Esophagus squamous epithelium (tissue), 5 donors: ENCODE measurements at regions of chr7 and their contacts with region 1.

Region 1: DNA sequence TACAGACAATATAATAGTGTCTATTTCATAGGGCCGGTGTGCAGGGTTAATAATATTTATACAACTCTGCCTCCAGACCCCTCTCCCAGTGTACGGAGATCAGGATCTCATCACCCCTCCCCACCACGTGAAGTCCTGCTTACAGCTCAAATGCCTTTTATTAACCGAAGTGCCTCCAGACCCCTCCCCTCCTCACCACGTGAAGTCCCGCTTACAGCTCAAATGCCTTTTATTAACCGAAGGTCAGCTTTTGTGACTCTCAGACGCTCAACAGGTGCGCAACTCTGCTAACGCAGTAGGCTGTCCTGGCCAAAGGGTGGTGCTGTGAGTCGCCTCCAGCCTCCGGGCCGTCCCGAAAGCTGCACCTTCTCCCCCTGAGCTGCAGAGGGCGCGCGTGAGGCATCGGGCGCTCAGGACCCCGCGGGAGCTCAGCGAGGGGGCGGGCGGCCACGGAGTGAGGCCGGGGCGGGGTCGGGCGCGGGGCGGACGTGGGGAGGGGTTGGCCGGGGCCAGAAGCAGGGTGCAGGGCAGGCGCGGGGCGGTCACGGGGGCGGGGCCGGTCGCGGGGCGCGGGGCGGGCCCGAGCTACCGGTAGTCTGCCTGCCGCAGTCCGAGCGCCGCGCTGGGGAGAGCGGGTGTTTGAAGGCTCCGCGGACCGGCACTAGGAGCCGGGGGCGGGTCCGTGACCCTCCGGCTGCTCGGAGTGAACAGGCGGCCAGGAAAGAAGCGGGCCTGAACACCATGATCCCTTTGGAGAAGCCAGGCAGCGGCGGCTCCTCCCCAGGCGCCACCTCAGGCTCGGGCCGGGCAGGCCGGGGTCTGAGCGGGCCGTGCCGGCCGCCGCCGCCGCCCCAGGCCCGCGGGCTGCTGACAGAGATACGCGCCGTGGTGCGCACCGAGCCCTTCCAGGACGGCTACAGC is at the start of gene STK17A:
- DNase-seq: peak; percentile 67
- H3K4me3 ChIP-seq: peak within 1 kb of the TSS; percentile 91 to 93 (median 92)
- H3K27ac ChIP-seq: peak within 1 kb of the TSS; percentile 94 to 99 (median 96)
- H3K4me1 ChIP-seq: peaks cover 9 to 42% (median 18%) of the 10 kb centered on the region in 3 donors
- H3K27me3 ChIP-seq: peaks cover 0 to 9% (median 0%) of the 10 kb centered on the region in 4 donors
- CTCF ChIP-seq: peak; percentile 95 to 100 (median 100)
- POLR2A ChIP-seq: peak in 3 of 4 donors; percentile 60 to 93 (median 90)
- total RNA-seq, gene STK17A: 21.9 to 34.4 (median 22.8) TPM

Region 2: DNA sequence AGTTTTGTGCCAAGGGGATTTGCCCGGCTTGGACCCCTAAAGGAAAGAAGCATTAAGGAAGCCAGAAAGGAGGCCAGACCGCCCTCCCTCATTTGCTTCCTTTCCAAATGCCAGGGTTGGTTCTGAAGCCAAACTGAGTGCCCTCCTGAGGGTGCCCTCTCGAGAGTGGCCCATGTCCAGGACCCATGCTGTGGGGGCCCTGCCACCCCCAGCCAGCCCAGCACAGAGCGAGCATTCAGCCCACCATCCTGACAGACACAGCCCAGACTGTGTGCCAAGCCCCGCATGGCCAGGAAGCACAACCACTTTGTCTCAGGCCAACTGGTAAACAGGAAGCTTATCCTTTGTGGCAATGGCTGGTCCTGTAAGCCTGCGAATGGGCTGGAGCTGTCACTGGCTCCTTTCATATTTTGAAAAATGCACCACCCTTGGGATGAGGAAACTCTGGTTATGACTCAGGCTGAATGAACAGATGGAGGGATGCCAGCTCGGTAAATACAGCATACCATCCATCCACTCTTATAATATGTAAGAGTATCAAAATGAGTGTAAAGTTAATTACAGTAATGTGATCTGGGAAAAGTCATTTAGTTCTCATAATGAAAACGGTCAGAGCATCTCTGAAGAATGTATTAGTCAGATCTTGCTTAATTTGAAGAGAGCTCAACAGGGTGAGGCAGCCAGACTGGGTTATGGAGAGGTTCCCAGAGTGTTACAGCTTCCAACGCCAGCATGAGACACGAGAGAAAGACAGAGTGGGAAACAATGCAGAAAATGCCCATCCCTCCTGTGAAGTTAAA is 65.1 kb after region 1 on chr7:
- intact Hi-C with region 1: loop called (anchors 10 kb)
- DNase-seq: no peak
- H3K4me3 ChIP-seq: peak overlapping the region in 2 of 4 donors; percentile 9 to 40
- H3K27ac ChIP-seq: peak overlapping the region; percentile 89 to 95 (median 92)
- H3K4me1 ChIP-seq: peaks cover 21 to 77% (median 63%) of the 10 kb centered on the region in 3 donors
- H3K27me3 ChIP-seq: no peaks in the 10 kb centered on the region
- CTCF ChIP-seq: no peak
- POLR2A ChIP-seq: no peak

Region 3: DNA sequence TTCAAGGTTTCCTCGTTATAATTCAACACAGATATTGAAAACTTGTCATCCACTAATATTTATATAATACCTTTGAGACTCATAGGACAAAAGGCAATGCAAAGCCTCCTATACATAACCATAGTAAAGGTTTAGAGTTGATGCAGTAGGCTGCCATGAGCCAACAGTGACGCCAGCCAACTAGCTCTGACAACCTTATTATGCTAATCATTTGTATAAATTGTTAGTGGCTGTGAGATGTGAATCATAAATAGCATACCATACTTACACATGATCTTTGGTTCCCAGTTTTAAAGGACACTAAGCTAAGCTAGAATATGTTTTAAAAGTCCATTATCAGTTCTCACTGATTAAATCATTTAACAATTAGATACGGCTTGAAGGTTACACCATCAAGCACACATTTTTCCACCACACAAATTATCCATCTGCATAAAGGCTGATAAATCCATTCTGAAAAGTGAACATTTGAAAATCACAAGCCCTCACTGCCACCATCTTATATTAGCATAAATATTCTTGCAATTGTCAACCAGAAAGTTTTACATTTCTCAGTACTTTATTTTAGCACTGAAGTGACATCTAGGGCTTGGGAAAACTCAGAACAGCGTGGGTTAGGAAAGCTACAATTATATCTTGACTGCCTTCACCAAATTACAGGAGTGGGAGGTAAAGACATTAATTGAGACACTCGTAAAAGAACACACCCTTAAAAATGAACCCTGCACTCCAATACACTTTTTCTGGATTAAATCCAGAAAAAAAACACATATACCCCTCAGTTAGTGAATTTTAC is 115.9 kb after region 1 on chr7:
- intact Hi-C with region 1: loop called (anchors 5 kb)
- DNase-seq: no peak
- H3K4me3 ChIP-seq: no peak overlapping the region
- H3K27ac ChIP-seq: no peak overlapping the region
- H3K4me1 ChIP-seq: peaks cover 0 to 10% (median 3%) of the 10 kb centered on the region in 3 donors
- H3K27me3 ChIP-seq: no peaks in the 10 kb centered on the region
- CTCF ChIP-seq: no peak
- POLR2A ChIP-seq: no peak

Region 4: DNA sequence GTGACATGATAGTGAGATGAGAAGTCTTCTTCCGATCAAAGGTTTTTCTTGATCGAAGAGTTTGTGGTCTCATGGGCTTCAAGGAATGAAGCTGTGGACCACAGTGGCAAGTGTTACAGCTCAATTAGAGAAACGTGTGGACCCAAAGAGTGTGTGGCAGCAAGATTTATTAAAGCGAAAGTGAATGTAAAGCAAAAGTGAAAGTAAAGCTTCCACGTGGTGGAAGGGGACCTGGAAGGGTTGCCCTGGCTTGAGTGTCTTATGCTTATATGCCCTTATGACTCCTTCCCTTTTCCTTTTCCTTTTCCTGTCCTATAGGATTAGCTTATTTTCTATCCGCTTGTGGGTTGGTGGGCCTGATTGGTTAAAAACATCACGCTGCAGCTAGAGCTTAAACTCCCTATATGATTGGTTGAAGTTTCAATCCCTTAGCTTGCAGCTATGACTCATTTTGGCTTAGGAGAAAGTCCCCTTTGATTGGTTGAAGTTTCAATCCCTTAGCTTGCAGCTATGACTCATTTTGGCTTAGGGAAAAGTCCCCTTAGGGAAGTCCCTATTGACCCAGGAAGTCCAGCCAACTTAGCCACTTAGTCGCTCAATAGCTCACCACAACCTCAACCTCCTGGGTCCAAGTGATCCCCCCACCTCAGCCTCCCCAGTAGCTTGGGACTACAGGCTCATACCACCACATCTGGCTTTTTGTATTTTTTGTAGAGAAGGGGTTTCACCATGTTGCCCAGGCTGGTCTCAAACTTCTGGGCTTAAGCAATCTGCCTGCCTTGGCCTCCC is 251.9 kb after region 1 on chr7:
- intact Hi-C with region 1: loop called (anchors 10 kb)
- DNase-seq: no peak
- H3K4me3 ChIP-seq: peak overlapping the region in 2 of 4 donors; percentile 12 to 57
- H3K27ac ChIP-seq: peak overlapping the region in 1 of 4 donors; percentile 10
- H3K4me1 ChIP-seq: peaks cover 0 to 9% (median 4%) of the 10 kb centered on the region in 3 donors
- H3K27me3 ChIP-seq: peaks cover 0 to under 1% (median 0%) of the 10 kb centered on the region in 4 donors
- CTCF ChIP-seq: no peak
- POLR2A ChIP-seq: no peak